ENCODE measurements at regions of chr13 and their contacts with region 1.

Region 1: GRCh38 chr13:70856711-70857110 is 748.5 kb upstream of the KLHL1 start:
- DNase-seq: no peak
- H3K4me3 ChIP-seq: no peak overlapping the region
- H3K27ac ChIP-seq: no peak overlapping the region
- H3K4me1 ChIP-seq: no peaks in the 10 kb centered on the region
- H3K27me3 ChIP-seq: no peaks in the 10 kb centered on the region
- CTCF ChIP-seq: no peak
- POLR2A ChIP-seq: no peak

Region 2: GRCh38 chr13:69828527-69828926 is 1028.2 kb before region 1 on chr13:
- intact Hi-C with region 1: loop called (anchors 10 kb)
- DNase-seq: no peak
- H3K4me3 ChIP-seq: no peak overlapping the region
- H3K27ac ChIP-seq: no peak overlapping the region
- H3K4me1 ChIP-seq: no peaks in the 10 kb centered on the region
- H3K27me3 ChIP-seq: no peaks in the 10 kb centered on the region
- CTCF ChIP-seq: no peak
- POLR2A ChIP-seq: no peak

Measured in breast epithelium (tissue), 4 donors.